Dendritic cell treated with granulocyte-macrophage colony-stimulating factor and Interleukin-4, amounts not matched to agents 40 ng/mL and 50 ng/mL, for 4 days (primary cell): ENCODE measurements at regions of chr13 and their contacts with region 1.

Region 1: GRCh38 chr13:76991796-76992547 is at the start of gene CLN5:
- H3K4me3 Mint-ChIP-seq: peak within 1 kb of the TSS; percentile 99
- H3K27ac Mint-ChIP-seq: peak within 1 kb of the TSS; percentile 99
- H3K4me1 Mint-ChIP-seq: peaks cover 24% of the 10 kb centered on the region
- H3K27me3 Mint-ChIP-seq: no peaks in the 10 kb centered on the region

Region 2: GRCh38 chr13:75870397-75870903 is 1121.5 kb before region 1 on chr13:
- intact Hi-C with region 1: loop called (anchors 5 kb)
- H3K4me3 Mint-ChIP-seq: peak overlapping the region; percentile 13
- H3K27ac Mint-ChIP-seq: no peak overlapping the region
- H3K4me1 Mint-ChIP-seq: peaks cover 28% of the 10 kb centered on the region
- H3K27me3 Mint-ChIP-seq: peaks cover 19% of the 10 kb centered on the region